IMR-90 (cell line): ENCODE measurements at regions of chr1 and their contacts with region 1.

Region 1: GRCh38 chr1:240027059-240027462 is 64.6 kb upstream of the FMN2 start:
- DNase-seq: peak; percentile 67
- ATAC-seq: peak; percentile 64
- H3K4me3 ChIP-seq: no peak overlapping the region
- H3K27ac ChIP-seq: no peak overlapping the region
- H3K4me1 ChIP-seq: peaks cover 10% of the 10 kb centered on the region
- H3K27me3 ChIP-seq: no peaks in the 10 kb centered on the region
- CTCF ChIP-seq: peak; percentile 98
- POLR2A ChIP-seq: no peak
- RAD21 ChIP-seq: peak; percentile 96

Region 2: DNA sequence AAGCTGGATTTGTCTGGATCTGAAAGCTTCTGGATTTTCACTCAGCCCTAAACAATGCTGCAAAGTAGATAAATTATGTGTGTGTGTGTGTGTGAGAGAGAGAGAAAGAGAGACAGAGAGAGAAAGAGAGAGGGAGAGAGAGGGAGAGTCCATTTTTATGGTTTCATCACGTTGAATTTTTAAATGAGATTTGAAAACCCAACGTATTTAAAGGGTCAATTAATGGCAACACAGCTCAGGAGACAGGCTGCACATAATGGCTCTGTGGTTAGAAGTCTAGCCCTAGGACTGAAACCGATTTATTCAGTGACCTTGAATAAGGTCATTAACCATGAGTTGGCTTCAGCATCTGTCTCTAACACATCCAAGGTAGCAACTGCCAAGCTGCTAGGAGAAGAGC is 29.3 kb after region 1 on chr1:
- CTCF ChIA-PET with region 1: no interaction called
- POLR2A ChIA-PET with region 1: no interaction called
- dilution Hi-C with region 1: no loop called
- in situ Hi-C with region 1: no loop called
- intact Hi-C with region 1: no loop called
- DNase-seq: no peak
- ATAC-seq: no peak
- H3K4me3 ChIP-seq: no peak overlapping the region
- H3K27ac ChIP-seq: no peak overlapping the region
- H3K4me1 ChIP-seq: no peaks in the 10 kb centered on the region
- H3K27me3 ChIP-seq: no peaks in the 10 kb centered on the region; the same call in 1 of the 2 replicates
- CTCF ChIP-seq: no peak
- POLR2A ChIP-seq: no peak
- RAD21 ChIP-seq: no peak

Region 3: GRCh38 chr1:240149484-240150094 is 122.5 kb after region 1 on chr1:
- CTCF ChIA-PET with region 1: interaction called, 9 read pairs
- POLR2A ChIA-PET with region 1: no interaction called
- dilution Hi-C with region 1: no loop called
- in situ Hi-C with region 1: loop called (anchors 5 kb)
- intact Hi-C with region 1: loop called (anchors 1 kb)
- DNase-seq: peak; percentile 52
- ATAC-seq: peak; percentile 63; the same call in 1 of the 2 replicates
- H3K4me3 ChIP-seq: no peak overlapping the region
- H3K27ac ChIP-seq: no peak overlapping the region
- H3K4me1 ChIP-seq: peaks cover 4% of the 10 kb centered on the region; the same call in 1 of the 2 replicates
- H3K27me3 ChIP-seq: no peaks in the 10 kb centered on the region
- CTCF ChIP-seq: peak; percentile 64
- POLR2A ChIP-seq: no peak
- RAD21 ChIP-seq: peak; percentile 54

Region 4: GRCh38 chr1:240414237-240414636 is 387.2 kb after region 1 on chr1:
- CTCF ChIA-PET with region 1: interaction called, 3 read pairs
- POLR2A ChIA-PET with region 1: no interaction called
- dilution Hi-C with region 1: no loop called
- in situ Hi-C with region 1: no loop called
- intact Hi-C with region 1: loop called (anchors 10 kb)
- DNase-seq: peak; percentile 70
- ATAC-seq: peak; percentile 77
- H3K4me3 ChIP-seq: no peak overlapping the region
- H3K27ac ChIP-seq: peak overlapping the region; percentile 51; the same call in 1 of the 2 replicates
- H3K4me1 ChIP-seq: peaks cover 3% of the 10 kb centered on the region
- H3K27me3 ChIP-seq: no peaks in the 10 kb centered on the region
- CTCF ChIP-seq: no peak
- POLR2A ChIP-seq: no peak
- RAD21 ChIP-seq: no peak

Region 5: DNA sequence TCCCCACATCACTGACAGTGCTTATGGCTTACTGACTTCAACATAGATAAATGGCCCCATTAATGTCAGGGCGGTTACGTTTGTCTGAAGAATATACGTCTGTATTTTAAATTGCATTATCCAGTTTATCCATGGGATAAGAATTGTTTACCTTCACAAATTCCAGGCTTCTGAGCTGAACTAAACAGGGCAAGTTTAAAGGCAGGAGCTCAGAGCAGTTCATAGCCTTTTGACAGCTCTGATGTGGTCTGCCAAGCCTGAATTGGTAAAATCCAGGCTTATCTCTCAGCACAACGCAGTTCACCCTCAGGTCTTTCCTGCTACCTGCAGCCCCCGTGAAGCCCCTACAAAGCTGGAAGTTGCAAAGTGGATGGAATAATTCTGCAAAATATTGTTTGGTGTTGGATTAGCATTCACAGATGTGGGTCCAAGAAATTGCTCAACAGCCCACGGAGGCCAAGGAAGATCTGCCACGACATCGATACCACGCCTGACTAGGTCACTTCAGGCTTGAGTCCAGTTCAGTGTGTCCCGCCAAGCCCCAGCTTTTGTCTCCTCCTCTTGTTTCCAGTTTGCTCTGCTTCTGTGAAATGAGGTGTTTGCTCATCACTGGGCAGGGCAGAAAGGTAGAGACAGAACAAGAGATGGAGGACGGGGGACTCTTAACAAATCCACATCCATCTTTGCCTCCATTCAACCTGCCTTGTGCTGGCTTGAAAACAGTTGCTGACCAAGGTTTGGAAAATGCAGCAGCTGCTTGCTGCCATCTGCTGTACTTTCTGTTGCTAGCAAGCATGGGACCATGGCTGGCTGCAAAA is 664.7 kb after region 1 on chr1:
- CTCF ChIA-PET with region 1: interaction called, 3 read pairs
- POLR2A ChIA-PET with region 1: no interaction called
- dilution Hi-C with region 1: no loop called
- in situ Hi-C with region 1: loop called (anchors 5 kb)
- intact Hi-C with region 1: loop called (anchors 1 kb)
- DNase-seq: peak; percentile 78
- ATAC-seq: peak; percentile 90
- H3K4me3 ChIP-seq: no peak overlapping the region
- H3K27ac ChIP-seq: peak overlapping the region; percentile 13
- H3K4me1 ChIP-seq: peaks cover 8% of the 10 kb centered on the region
- H3K27me3 ChIP-seq: no peaks in the 10 kb centered on the region; the same call in 1 of the 2 replicates
- CTCF ChIP-seq: peak; percentile 92
- POLR2A ChIP-seq: no peak
- RAD21 ChIP-seq: peak; percentile 98

Region 6: DNA sequence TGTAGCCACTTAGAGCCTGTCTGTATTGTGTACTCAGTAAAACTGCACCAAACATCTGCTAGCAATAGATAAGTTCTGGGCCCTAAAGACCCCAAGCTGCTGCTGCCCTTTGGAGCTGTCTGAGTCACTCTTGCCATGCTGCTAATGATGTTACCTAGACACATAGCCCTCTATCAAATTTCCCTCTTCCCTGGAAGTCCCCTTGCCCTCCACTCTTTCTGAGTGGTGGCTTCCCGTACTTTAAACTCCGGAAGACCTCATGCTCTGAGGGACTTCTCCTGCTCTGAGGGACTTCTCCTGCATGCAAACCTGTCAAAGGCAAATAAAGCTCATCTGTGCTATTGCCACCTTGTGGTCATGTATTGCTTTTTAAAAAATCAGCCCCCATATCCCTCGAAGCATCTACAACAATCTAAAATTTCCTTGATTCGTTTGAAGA is 1458.5 kb after region 1 on chr1:
- CTCF ChIA-PET with region 1: no interaction called
- POLR2A ChIA-PET with region 1: no interaction called
- dilution Hi-C with region 1: no loop called
- in situ Hi-C with region 1: loop called (anchors 25 kb)
- intact Hi-C with region 1: loop called (anchors 10 kb)
- DNase-seq: peak; percentile 16
- ATAC-seq: peak; percentile 30; the same call in 1 of the 2 replicates
- H3K4me3 ChIP-seq: no peak overlapping the region
- H3K27ac ChIP-seq: no peak overlapping the region
- H3K4me1 ChIP-seq: peaks cover 6% of the 10 kb centered on the region
- H3K27me3 ChIP-seq: no peaks in the 10 kb centered on the region
- CTCF ChIP-seq: peak; percentile 33
- POLR2A ChIP-seq: no peak
- RAD21 ChIP-seq: peak; percentile 30; the same call in 1 of the 2 replicates